Naive thymus-derived CD4-positive, alpha-beta T cell (primary cell): ENCODE measurements at regions of chr10 and their contacts with region 1.

Region 1: DNA sequence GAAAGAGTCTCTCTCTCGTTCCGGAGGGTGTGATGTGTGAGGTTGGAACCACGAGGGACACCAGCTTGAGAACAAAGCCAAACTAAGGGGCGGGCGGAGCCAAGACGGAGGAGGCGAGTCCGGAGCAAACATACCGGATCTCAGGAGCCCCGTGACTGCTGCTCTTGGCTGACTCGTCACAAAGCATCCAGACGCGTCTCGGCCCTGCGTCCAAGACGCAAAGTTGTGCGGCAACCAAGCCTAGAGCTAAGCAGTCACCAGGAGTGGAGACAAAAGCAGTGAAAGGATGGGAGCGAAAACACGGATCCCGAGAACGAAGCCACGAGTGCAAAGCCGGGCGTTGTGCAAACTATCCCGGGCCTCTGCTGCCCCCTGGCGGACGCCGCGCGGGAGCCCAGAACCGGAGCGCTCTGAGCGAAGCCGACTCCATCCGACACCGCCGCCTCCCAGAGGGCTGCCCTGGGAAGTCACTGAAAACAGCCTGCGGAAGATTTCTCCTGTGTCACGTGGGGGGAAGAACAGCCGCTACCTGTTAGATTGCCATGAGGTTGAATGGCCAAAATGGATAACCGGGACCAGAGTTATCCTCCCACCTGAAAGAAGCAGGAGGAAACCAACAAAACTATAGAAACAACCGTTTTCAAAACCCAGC is 46.4 kb upstream of the TMEM72 start:
- DNase-seq: peak; percentile 67 to 90 (median 82)
- ATAC-seq: peak; percentile 91
- H3K4me3 ChIP-seq: peak overlapping the region; percentile 93
- H3K4me3 Mint-ChIP-seq: peak overlapping the region; percentile 76 to 96 (median 92)
- H3K27ac ChIP-seq: no peak overlapping the region
- H3K27ac Mint-ChIP-seq: peak overlapping the region in 3 of 9 donors; percentile 45 to 79 (median 66)
- H3K4me1 ChIP-seq: peaks cover 4% of the 10 kb centered on the region in 2 donors
- H3K4me1 Mint-ChIP-seq: peaks cover 0 to 20% (median 12%) of the 10 kb centered on the region in 7 donors
- H3K27me3 ChIP-seq: peaks cover 0 to 3% of the 10 kb centered on the region in 2 donors
- H3K27me3 Mint-ChIP-seq: peaks cover 46 to 64% (median 62%) of the 10 kb centered on the region in 5 donors

Region 2: DNA sequence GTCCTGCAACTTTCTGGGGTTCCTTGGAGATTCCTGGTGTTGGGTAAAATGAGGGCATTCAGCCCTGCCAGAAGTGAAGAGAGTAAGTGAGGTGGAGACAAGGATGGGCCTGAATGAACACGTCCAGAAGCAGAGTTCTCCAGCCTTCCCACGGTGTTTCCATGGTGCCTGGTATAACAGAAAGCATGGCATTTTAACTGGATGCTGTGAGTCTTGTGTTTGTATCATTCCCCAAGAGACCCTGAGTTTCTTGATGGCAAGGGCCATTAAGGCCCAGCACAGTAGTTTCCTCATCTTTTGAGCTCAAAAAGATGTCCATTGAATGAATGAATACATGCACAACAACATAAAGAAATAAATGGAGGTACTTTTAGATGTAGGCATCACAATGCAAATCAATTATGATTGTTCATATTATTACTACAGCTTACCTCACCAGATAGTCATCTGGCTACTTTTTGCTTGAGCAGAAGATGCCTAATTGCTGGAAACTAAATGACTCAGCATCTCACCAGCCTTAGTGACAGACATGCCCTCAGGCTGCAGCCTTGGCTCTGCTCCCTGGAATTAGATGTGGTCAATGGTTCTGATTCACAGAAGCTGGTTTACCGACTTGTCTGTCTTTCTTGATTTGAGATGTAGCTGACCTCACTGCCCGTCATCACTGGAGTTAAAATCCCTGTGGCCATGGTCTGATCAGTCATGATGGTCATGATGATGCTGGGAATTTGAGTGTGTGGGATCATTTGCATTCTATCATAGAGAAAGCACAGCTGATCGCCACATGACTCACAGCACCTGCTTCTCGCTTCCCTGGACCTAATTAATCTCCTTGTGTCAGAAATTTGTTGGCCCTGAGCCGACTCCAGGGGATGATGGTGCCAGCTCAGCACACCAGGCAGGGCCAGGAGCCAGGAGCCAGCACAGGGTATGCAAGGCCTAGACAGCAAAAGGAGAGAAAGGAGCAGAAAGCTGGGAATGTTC is 563.8 kb before region 1 on chr10:
- CTCF ChIA-PET with region 1: no interaction called
- POLR2A ChIA-PET with region 1: no interaction called
- intact Hi-C with region 1: loop called in 1 of 2 experiments (anchors 10 kb)
- DNase-seq: no peak
- ATAC-seq: no peak
- H3K4me3 ChIP-seq: no peak overlapping the region
- H3K4me3 Mint-ChIP-seq: no peak overlapping the region
- H3K27ac ChIP-seq: no peak overlapping the region
- H3K27ac Mint-ChIP-seq: no peak overlapping the region
- H3K4me1 ChIP-seq: no peaks in the 10 kb centered on the region
- H3K4me1 Mint-ChIP-seq: no peaks in the 10 kb centered on the region
- H3K27me3 ChIP-seq: no peaks in the 10 kb centered on the region
- H3K27me3 Mint-ChIP-seq: peaks cover 0 to 20% (median 0%) of the 10 kb centered on the region in 5 donors

Region 3: GRCh38 chr10:44386546-44387052 is 478.2 kb before region 1 on chr10:
- CTCF ChIA-PET with region 1: no interaction called
- POLR2A ChIA-PET with region 1: no interaction called
- intact Hi-C with region 1: loop called in 1 of 2 experiments (anchors 10 kb)
- DNase-seq: peak in 6 of 9 donors; percentile 10 to 48 (median 19)
- ATAC-seq: peak; percentile 61
- H3K4me3 ChIP-seq: no peak overlapping the region
- H3K4me3 Mint-ChIP-seq: no peak overlapping the region
- H3K27ac ChIP-seq: no peak overlapping the region
- H3K27ac Mint-ChIP-seq: no peak overlapping the region
- H3K4me1 ChIP-seq: no peaks in the 10 kb centered on the region
- H3K4me1 Mint-ChIP-seq: peaks cover 0 to 8% (median 4%) of the 10 kb centered on the region in 7 donors
- H3K27me3 ChIP-seq: peaks cover 0 to 3% of the 10 kb centered on the region in 2 donors
- H3K27me3 Mint-ChIP-seq: peaks cover 23 to 42% (median 39%) of the 10 kb centered on the region in 5 donors

Region 4: GRCh38 chr10:44878706-44879530 is 14.2 kb after region 1 on chr10:
- CTCF ChIA-PET with region 1: interaction called, 12 read pairs
- POLR2A ChIA-PET with region 1: interaction called, 3 read pairs
- intact Hi-C with region 1: loop called in 1 of 2 experiments (anchors 1 kb)
- DNase-seq: peak; percentile 63 to 85 (median 81)
- ATAC-seq: peak; percentile 83
- H3K4me3 ChIP-seq: peak overlapping the region; percentile 60
- H3K4me3 Mint-ChIP-seq: peak overlapping the region; percentile 81 to 99 (median 93)
- H3K27ac ChIP-seq: peak overlapping the region; percentile 39
- H3K27ac Mint-ChIP-seq: peak overlapping the region; percentile 56 to 93 (median 88)
- H3K4me1 ChIP-seq: peaks cover 0 to 10% of the 10 kb centered on the region in 2 donors
- H3K4me1 Mint-ChIP-seq: peaks cover 5 to 19% (median 16%) of the 10 kb centered on the region in 7 donors
- H3K27me3 ChIP-seq: no peaks in the 10 kb centered on the region
- H3K27me3 Mint-ChIP-seq: peaks cover 0 to 16% (median 0%) of the 10 kb centered on the region in 5 donors

Region 5: GRCh38 chr10:44925224-44925623 is 60.5 kb after region 1 on chr10:
- CTCF ChIA-PET with region 1: interaction called, 6 read pairs
- POLR2A ChIA-PET with region 1: no interaction called
- intact Hi-C with region 1: loop called in 1 of 2 experiments (anchors 1 kb)
- DNase-seq: peak in 3 of 9 donors; percentile 16 to 29 (median 20)
- ATAC-seq: peak; percentile 47
- H3K4me3 ChIP-seq: no peak overlapping the region
- H3K4me3 Mint-ChIP-seq: no peak overlapping the region
- H3K27ac ChIP-seq: no peak overlapping the region
- H3K27ac Mint-ChIP-seq: no peak overlapping the region
- H3K4me1 ChIP-seq: no peaks in the 10 kb centered on the region
- H3K4me1 Mint-ChIP-seq: no peaks in the 10 kb centered on the region
- H3K27me3 ChIP-seq: no peaks in the 10 kb centered on the region
- H3K27me3 Mint-ChIP-seq: peaks cover 0 to 5% (median 0%) of the 10 kb centered on the region in 5 donors

Region 6: GRCh38 chr10:46544989-46545791 is 1680.4 kb after region 1 on chr10:
- CTCF ChIA-PET with region 1: no interaction called
- POLR2A ChIA-PET with region 1: no interaction called
- intact Hi-C with region 1: no loop called
- DNase-seq: peak in 2 of 9 donors; percentile 9 to 20
- ATAC-seq: no peak
- H3K4me3 ChIP-seq: no peak overlapping the region
- H3K4me3 Mint-ChIP-seq: no peak overlapping the region
- H3K27ac ChIP-seq: no peak overlapping the region
- H3K27ac Mint-ChIP-seq: no peak overlapping the region
- H3K4me1 ChIP-seq: no peaks in the 10 kb centered on the region
- H3K4me1 Mint-ChIP-seq: peaks cover 0 to 16% (median 7%) of the 10 kb centered on the region in 7 donors
- H3K27me3 ChIP-seq: no peaks in the 10 kb centered on the region
- H3K27me3 Mint-ChIP-seq: peaks cover 22 to 34% (median 23%) of the 10 kb centered on the region in 5 donors